Cardiac septum (tissue), 1 donor: ENCODE measurements at regions of chrX and their contacts with region 1.

Region 1: GRCh38 chrX:13051529-13052172 is 7.2 kb upstream of the FAM9C start:
- DNase-seq: no peak

Region 2: GRCh38 chrX:13094828-13095341 is 43.2 kb after region 1 on chrX:
- intact Hi-C with region 1: loop called (anchors 5 kb)
- DNase-seq: no peak

Region 3: GRCh38 chrX:13159886-13160285 is 108.2 kb after region 1 on chrX:
- intact Hi-C with region 1: loop called (anchors 2 kb)
- DNase-seq: no peak